Activated T-helper 1 cell treated with anti-CD3 and anti-CD28 coated beads, Interleukin-12 subunit alpha, Interleukin-12 subunit beta, Interleukin-2, Interleukin-4 antibody, amounts not matched to agents 30 ng/mL and 10 ng/mL and 1 ng/mL, durations not matched to agents 14 hours and 24 hours and 36 hours (primary cell): ENCODE measurements at regions of chrX and their contacts with region 1.

Region 1: GRCh38 chrX:148380650-148381561 is 119.5 kb upstream of the AFF2 start:
- DNase-seq: peak; percentile 44
- H3K4me3 Mint-ChIP-seq: peak overlapping the region; percentile 74
- H3K27ac Mint-ChIP-seq: peak overlapping the region; percentile 91
- H3K4me1 Mint-ChIP-seq: peaks cover 28% of the 10 kb centered on the region
- H3K27me3 Mint-ChIP-seq: no peaks in the 10 kb centered on the region

Region 2: GRCh38 chrX:147911192-147912022 is 469.5 kb before region 1 on chrX and contains the start of gene FMR1:
- intact Hi-C with region 1: loop called (anchors 2 kb)
- DNase-seq: peak; percentile 91
- H3K4me3 Mint-ChIP-seq: peak within 1 kb of the TSS; percentile 96
- H3K27ac Mint-ChIP-seq: peak within 1 kb of the TSS; percentile 92
- H3K4me1 Mint-ChIP-seq: peaks cover 37% of the 10 kb centered on the region
- H3K27me3 Mint-ChIP-seq: no peaks in the 10 kb centered on the region
- total RNA-seq, gene FMR1: 35.9 and 37.5 TPM in 2 replicates

Region 3: DNA sequence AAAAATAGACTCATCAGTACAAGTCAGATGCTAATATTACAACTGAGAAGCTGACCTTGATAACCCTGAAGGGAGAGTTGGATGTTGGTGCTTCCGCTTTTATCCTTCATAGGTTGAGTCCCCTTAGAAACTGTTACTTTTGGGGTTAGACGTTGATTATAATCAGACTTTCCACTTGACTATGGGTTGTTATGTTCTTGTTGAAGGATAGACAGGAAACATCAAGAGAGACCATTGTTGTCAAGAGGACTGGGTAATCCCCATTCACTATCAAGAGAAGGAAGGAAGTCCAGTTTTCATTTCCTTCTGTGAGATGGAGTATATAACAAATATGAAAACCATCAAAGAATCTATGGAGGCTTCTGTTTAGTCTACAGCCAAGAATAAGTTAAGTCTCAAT is 110.4 kb before region 1 on chrX:
- intact Hi-C with region 1: loop called (anchors 2 kb)
- DNase-seq: no peak
- H3K4me3 Mint-ChIP-seq: no peak overlapping the region
- H3K27ac Mint-ChIP-seq: peak overlapping the region; percentile 48
- H3K4me1 Mint-ChIP-seq: peaks cover 7% of the 10 kb centered on the region
- H3K27me3 Mint-ChIP-seq: no peaks in the 10 kb centered on the region

Region 4: DNA sequence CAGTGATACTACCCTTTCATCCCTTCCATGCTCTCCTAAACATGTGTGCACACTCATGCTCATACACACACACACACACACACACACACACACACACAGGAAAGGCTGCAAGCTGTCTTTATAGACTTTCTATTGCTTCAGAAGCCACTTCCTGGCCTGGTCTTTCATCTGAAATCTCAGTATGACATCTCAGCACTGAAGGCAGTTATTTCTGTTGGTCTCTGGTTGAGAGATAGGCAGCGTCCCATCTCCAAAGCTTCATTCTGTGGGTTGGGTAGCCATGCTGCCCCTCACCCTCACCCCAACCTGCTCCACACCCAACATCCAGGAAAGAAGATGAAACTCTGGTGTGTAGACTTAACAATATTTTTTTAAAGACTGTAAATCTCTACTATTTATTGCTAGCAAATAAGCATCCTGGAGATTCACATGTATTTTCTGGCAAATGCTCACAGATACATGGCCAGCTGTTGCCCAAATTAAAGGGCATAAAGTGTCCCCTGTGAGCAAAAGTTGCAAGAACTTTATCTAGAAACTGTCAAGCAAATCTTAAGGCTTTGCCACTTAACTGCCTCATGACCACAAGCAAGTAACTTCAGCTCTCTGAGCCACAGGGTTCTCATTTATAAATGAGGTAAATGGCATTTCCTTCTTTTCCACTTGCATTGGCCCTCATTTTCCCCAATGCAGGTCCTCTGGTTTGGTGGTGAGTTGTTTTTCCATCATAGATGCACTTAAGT is 70.3 kb before region 1 on chrX:
- intact Hi-C with region 1: loop called (anchors 1 kb)
- DNase-seq: peak; percentile 40
- H3K4me3 Mint-ChIP-seq: peak overlapping the region; percentile 42
- H3K27ac Mint-ChIP-seq: peak overlapping the region; percentile 78
- H3K4me1 Mint-ChIP-seq: peaks cover 34% of the 10 kb centered on the region
- H3K27me3 Mint-ChIP-seq: no peaks in the 10 kb centered on the region

Region 5: GRCh38 chrX:148500423-148501385 is 119.8 kb after region 1 on chrX and contains the start of gene AFF2:
- intact Hi-C with region 1: loop called (anchors 2 kb)
- DNase-seq: no peak
- H3K4me3 Mint-ChIP-seq: peak within 1 kb of the TSS; percentile 85
- H3K27ac Mint-ChIP-seq: peak within 1 kb of the TSS; percentile 18
- H3K4me1 Mint-ChIP-seq: peaks cover 15% of the 10 kb centered on the region
- H3K27me3 Mint-ChIP-seq: peaks cover 13% of the 10 kb centered on the region
- total RNA-seq, gene AFF2: 1.5 and 1.8 TPM in 2 replicates

Region 6: DNA sequence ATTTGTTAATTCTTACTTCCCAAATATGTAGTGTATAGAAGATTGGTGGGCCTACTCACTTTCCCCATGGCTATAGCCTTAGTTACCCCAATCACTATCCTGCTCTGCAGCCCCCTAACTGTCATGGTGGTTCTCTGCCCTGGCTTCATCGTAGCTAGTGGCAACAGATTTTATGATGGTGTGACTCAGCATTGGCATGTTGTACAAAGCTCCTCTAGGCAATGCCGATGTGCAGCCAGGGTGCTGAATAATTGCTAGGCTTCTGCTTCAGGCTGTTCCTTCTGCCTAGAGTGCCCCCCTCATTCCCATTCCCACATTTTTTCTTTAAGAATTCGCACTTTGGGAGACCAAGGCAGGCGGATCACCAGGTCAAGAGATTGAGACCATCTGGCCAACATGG is 154.7 kb after region 1 on chrX:
- intact Hi-C with region 1: no loop called
- DNase-seq: no peak
- H3K4me3 Mint-ChIP-seq: no peak overlapping the region
- H3K27ac Mint-ChIP-seq: no peak overlapping the region
- H3K4me1 Mint-ChIP-seq: no peaks in the 10 kb centered on the region
- H3K27me3 Mint-ChIP-seq: peaks cover 3% of the 10 kb centered on the region

Region 7: DNA sequence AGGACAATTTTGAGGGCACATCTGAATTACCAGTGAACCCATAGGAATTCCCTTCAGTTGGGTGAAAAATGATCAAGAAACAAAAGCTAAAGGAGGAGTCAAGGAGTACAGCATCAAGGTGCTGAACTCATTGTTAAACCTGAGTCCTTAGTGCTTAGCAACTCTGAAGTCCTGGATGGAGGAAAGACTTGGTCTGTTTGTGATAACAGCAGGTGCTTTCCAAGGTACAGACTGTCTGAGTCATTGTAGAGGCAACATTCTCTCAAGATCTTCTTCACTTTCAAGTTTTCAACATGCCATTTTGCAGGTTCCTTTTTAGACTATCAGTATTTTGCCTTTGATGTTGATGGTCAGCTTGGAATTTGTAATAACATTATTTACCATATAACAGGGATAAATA is 413.4 kb after region 1 on chrX:
- intact Hi-C with region 1: no loop called
- DNase-seq: no peak
- H3K4me3 Mint-ChIP-seq: no peak overlapping the region
- H3K27ac Mint-ChIP-seq: no peak overlapping the region
- H3K4me1 Mint-ChIP-seq: no peaks in the 10 kb centered on the region
- H3K27me3 Mint-ChIP-seq: no peaks in the 10 kb centered on the region